ENCODE measurements at regions of chr1 and their contacts with region 1.

Region 1: DNA sequence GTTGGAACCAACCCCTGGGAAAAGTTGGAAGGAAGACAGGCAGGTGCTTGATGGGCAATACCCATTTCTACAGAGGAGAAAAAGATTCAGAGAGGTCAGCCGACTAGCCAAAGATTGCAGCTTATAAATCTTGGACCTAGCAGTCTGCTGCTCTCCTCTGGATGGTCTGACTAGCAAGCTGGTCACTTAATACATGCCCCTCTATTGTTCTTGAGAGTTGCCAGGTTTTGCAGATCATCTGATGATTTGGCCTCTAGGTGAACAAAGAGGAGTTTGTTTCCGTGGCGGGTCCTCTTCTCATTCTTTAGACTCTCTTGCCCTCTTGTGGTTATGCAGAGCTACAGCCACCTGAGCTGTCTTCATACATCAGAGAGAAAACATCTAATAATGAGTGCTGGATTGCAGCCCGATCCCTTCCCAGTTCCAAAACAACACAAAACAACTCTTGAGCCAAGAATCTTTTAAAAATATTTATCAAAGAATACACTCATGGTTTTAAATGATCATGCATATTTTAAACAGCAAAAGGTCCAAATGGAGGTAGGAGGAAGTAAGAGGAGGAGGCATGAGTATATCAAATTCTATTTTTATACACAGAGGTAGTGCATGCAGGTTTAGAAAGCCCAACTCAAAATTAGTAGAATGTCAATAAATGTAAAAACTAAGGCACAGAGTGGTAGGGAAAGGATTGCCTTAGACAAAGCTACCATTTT is 115.7 kb downstream of the SLC30A10 start:
- DNase-seq: peak; percentile 71
- ATAC-seq: peak; percentile 95
- H3K4me3 ChIP-seq: no peak overlapping the region
- H3K27ac ChIP-seq: no peak overlapping the region
- H3K4me1 ChIP-seq: peaks cover 2% of the 10 kb centered on the region; the same call in 1 of the 2 replicates
- H3K27me3 ChIP-seq: peaks cover 7% of the 10 kb centered on the region
- CTCF ChIP-seq: peak; percentile 81
- POLR2A ChIP-seq: 0 out of 2 replicates have a peak, but pooled peaks have one; percentile 25
- RAD21 ChIP-seq: peak; percentile 84

Region 2: DNA sequence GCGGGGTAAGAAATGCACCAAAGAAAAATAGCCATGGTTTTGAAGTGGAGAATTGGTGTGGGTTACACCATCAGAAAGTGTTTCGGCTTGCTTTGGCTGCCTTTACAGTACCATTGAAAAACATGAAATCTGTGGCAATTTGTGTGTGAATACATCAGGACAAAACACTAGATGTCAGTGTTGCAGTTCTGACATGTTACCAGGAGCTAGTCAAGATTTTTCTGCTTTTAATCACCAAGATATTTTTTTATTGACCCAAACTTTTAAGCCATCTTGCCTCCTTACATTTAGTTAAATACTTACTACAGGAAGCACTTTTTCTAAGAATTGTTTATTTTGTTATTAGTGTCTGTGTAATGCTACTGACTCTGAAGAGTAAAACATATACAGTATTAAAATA is 1513.2 kb before region 1 on chr1:
- CTCF ChIA-PET with region 1: interaction called, 5 read pairs
- POLR2A ChIA-PET with region 1: no interaction called
- dilution Hi-C with region 1: no loop called
- in situ Hi-C with region 1: no loop called
- intact Hi-C with region 1: loop called (anchors 1 kb)
- DNase-seq: peak; percentile 77
- ATAC-seq: peak; percentile 89
- H3K4me3 ChIP-seq: no peak overlapping the region
- H3K27ac ChIP-seq: no peak overlapping the region
- H3K4me1 ChIP-seq: 0 out of 2 replicates have a peak, but pooled peaks cover 1% of the 10 kb centered on the region
- H3K27me3 ChIP-seq: no peaks in the 10 kb centered on the region
- CTCF ChIP-seq: peak; percentile 65
- POLR2A ChIP-seq: no peak
- RAD21 ChIP-seq: peak; percentile 68

Region 3: GRCh38 chr1:218330043-218330623 is 1482.5 kb before region 1 on chr1:
- CTCF ChIA-PET with region 1: interaction called, 4 read pairs
- POLR2A ChIA-PET with region 1: no interaction called
- dilution Hi-C with region 1: no loop called
- in situ Hi-C with region 1: loop called (anchors 10 kb)
- intact Hi-C with region 1: loop called (anchors 1 kb)
- DNase-seq: peak; percentile 61
- ATAC-seq: peak; percentile 74
- H3K4me3 ChIP-seq: no peak overlapping the region
- H3K27ac ChIP-seq: no peak overlapping the region
- H3K4me1 ChIP-seq: peaks cover 2% of the 10 kb centered on the region; the same call in 1 of the 2 replicates
- H3K27me3 ChIP-seq: no peaks in the 10 kb centered on the region
- CTCF ChIP-seq: peak; percentile 78
- POLR2A ChIP-seq: no peak
- RAD21 ChIP-seq: peak; percentile 92

Region 4: DNA sequence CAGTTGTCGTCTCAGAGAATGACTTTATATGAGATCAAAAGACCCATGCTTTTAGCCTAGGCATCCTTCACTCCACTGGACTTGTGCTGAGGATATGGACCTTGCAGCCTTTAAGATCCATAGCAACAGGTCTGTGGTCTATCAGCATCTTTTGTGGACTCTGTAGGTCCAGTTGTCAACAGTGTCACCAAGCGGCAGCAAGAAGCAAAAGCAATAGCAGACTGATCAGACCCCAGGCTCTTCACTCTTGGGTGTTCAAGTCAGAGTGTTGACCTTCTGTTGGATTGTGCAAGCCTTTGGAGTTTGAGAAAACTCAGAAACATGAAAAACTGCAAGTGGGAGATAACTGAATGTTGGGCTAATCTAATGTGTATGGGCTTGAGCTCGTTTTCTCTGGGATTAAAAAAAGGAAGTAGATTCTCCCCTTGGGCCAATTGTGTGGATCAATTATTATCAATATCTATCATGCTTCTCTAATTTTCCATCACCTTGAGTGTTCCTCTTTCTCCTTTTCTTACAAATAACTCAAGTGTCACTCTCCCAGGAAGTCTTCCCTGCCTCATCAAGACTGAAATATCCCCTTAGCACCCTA is 494.8 kb before region 1 on chr1:
- CTCF ChIA-PET with region 1: no interaction called
- POLR2A ChIA-PET with region 1: no interaction called
- dilution Hi-C with region 1: no loop called
- in situ Hi-C with region 1: no loop called
- intact Hi-C with region 1: loop called (anchors 10 kb)
- DNase-seq: no peak
- ATAC-seq: no peak
- H3K4me3 ChIP-seq: no peak overlapping the region
- H3K27ac ChIP-seq: no peak overlapping the region
- H3K4me1 ChIP-seq: no peaks in the 10 kb centered on the region
- H3K27me3 ChIP-seq: peaks cover 5% of the 10 kb centered on the region
- CTCF ChIP-seq: no peak
- POLR2A ChIP-seq: no peak
- RAD21 ChIP-seq: peak; percentile 31; the same call in 1 of the 2 replicates

Region 5: GRCh38 chr1:219416594-219417238 is 395.9 kb before region 1 on chr1:
- CTCF ChIA-PET with region 1: no interaction called
- POLR2A ChIA-PET with region 1: no interaction called
- dilution Hi-C with region 1: no loop called
- in situ Hi-C with region 1: no loop called
- intact Hi-C with region 1: loop called (anchors 10 kb)
- DNase-seq: peak; percentile 50
- ATAC-seq: peak; percentile 56; the same call in 1 of the 2 replicates
- H3K4me3 ChIP-seq: no peak overlapping the region
- H3K27ac ChIP-seq: no peak overlapping the region
- H3K4me1 ChIP-seq: no peaks in the 10 kb centered on the region
- H3K27me3 ChIP-seq: no peaks in the 10 kb centered on the region
- CTCF ChIP-seq: peak; percentile 64
- POLR2A ChIP-seq: no peak
- RAD21 ChIP-seq: peak; percentile 69

Region 6: DNA sequence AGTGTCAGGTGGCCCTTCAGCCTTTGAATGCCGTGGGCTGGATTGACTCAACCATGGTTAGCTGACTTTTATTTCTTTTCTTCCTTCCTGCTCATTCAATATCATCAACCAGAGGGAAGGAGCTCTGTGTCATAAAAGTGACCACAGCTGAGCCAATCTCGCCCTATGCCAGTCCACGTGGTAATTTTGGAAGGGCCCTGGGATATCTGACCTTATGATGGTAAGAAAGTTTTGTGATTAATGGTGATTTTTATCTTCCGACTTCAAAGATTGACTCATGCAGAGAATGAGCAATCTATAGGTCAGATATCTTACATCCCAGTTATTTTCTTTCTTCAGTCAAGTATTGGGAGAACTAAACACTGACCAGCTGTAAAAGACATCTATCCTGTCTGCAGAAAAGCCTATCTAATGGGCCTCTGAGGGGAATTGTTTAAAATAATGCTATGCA is 370.0 kb before region 1 on chr1:
- CTCF ChIA-PET with region 1: no interaction called
- POLR2A ChIA-PET with region 1: no interaction called
- dilution Hi-C with region 1: no loop called
- in situ Hi-C with region 1: no loop called
- intact Hi-C with region 1: no loop called
- DNase-seq: peak; percentile 73
- ATAC-seq: no peak
- H3K4me3 ChIP-seq: no peak overlapping the region
- H3K27ac ChIP-seq: no peak overlapping the region
- H3K4me1 ChIP-seq: no peaks in the 10 kb centered on the region
- H3K27me3 ChIP-seq: no peaks in the 10 kb centered on the region
- CTCF ChIP-seq: no peak
- POLR2A ChIP-seq: no peak
- RAD21 ChIP-seq: no peak

Region 7: DNA sequence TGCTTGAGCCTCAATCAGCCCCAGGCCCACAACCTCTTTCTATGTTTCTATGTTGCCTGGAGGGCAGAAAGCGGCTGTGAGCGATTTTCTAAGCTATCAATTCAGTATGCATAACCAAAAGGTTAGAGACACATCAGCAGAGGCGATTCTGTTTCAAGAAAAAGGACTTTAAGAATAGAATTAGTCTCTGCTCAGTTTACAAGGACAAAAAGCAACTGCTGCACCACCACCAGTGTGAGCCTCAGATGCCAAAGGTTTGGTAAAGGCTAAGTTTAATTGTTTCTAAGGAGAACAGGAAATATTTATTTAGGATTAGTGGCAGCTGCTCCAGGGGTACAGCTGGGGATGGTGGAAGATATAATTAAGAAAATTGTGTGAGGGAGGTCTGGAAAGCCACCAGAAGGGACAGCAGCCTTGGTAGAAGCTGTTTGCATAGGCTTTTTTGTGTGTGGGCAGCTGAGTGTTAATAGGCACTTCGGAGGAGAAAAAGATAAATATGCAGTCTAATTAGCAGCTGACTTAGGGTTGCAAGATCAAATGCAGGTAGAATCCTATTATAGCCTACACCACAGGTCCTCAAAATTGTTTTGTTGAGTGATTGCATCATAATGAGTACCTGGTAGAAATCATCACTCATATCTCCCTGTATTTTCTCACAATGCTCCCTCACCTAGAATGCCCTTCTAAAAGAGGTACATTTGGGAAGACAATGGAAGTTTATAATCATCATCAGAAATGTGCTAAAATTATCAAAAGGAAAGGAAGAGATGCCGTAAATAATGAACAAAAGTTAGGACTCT is 235.5 kb before region 1 on chr1:
- CTCF ChIA-PET with region 1: no interaction called
- POLR2A ChIA-PET with region 1: no interaction called
- dilution Hi-C with region 1: no loop called
- in situ Hi-C with region 1: loop called (anchors 10 kb)
- intact Hi-C with region 1: no loop called
- DNase-seq: no peak
- ATAC-seq: no peak
- H3K4me3 ChIP-seq: no peak overlapping the region
- H3K27ac ChIP-seq: no peak overlapping the region
- H3K4me1 ChIP-seq: peaks cover 3% of the 10 kb centered on the region; the same call in 1 of the 2 replicates
- H3K27me3 ChIP-seq: no peaks in the 10 kb centered on the region
- CTCF ChIP-seq: no peak
- POLR2A ChIP-seq: no peak
- RAD21 ChIP-seq: no peak

Region 8: DNA sequence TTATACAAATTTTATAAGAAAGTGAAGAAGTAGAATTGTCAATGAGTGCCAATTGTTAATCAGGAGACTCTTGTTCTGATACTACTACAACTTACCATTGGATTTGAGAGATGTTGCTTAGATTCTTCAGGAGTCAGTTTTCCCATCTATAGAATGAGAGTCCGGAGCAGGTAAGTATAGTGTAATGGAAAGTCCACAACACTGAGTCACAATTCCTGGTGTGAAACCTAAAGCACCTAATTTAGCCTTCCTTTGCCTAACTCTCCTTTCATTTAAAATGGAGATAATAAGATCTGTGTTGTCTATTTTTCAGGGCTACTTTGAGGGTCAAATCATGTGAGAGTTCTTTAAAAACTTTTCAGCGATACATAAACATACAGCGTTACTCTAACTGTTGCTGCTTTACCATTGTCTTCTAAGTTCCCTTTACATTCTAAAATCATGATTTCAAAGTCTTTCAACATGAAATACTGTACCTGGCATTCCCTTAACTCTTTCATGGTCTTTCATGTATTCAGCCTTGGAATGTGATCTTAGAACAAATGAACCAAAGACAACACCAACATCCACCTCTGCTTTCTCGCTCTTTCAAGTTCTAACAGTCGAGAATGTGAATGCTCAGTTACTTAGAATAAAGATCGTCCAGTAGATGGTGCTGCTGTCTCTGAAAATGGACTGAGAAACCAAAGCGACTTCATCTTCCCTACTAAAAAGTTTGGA is 24.8 kb after region 1 on chr1:
- CTCF ChIA-PET with region 1: no interaction called
- POLR2A ChIA-PET with region 1: no interaction called
- dilution Hi-C with region 1: no loop called
- in situ Hi-C with region 1: no loop called
- intact Hi-C with region 1: no loop called
- DNase-seq: peak; percentile 54
- ATAC-seq: peak; percentile 72
- H3K4me3 ChIP-seq: no peak overlapping the region
- H3K27ac ChIP-seq: no peak overlapping the region
- H3K4me1 ChIP-seq: no peaks in the 10 kb centered on the region
- H3K27me3 ChIP-seq: peaks cover 2% of the 10 kb centered on the region; the same call in 1 of the 2 replicates
- CTCF ChIP-seq: peak; percentile 51
- POLR2A ChIP-seq: no peak
- RAD21 ChIP-seq: peak; percentile 52